Aorta (tissue), 5 donors: ENCODE measurements at regions of chr18 and their contacts with region 1.

Region 1: GRCh38 chr18:21004726-21005125 is 106.9 kb downstream of the ROCK1 start:
- DNase-seq: no peak
- ATAC-seq: peak; percentile 93
- H3K4me3 ChIP-seq: peak overlapping the region in 1 of 2 donors; percentile 26
- H3K27ac ChIP-seq: peak overlapping the region in 1 of 2 donors; percentile 28
- H3K4me1 ChIP-seq: peaks cover 0 to 3% of the 10 kb centered on the region in 2 donors
- H3K27me3 ChIP-seq: no peaks in the 10 kb centered on the region

Region 2: DNA sequence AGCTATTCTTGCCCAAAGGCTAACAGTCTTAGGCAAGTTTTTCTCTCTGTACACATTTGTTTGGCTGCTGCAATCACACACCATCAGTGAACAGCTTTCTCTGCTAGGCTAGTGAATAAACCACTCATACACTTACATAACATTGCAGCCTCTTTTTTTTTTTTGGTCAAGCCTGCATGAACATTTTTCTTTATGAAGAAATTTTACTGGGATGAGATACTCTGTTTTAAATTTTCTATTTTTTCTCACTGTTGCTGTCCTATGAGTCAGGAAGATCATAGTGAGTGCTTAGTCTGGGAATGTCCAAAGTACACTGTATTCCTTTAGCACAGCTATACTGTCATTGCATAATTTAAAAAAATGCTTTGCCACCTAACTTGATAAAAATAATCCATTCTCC is 48.4 kb after region 1 on chr18:
- intact Hi-C with region 1: loop called in 1 of 2 experiments (anchors 5 kb)
- DNase-seq: no peak
- ATAC-seq: peak; percentile 80
- H3K4me3 ChIP-seq: no peak overlapping the region
- H3K27ac ChIP-seq: peak overlapping the region in 1 of 2 donors; percentile 10
- H3K4me1 ChIP-seq: peaks cover 7 to 15% of the 10 kb centered on the region in 2 donors
- H3K27me3 ChIP-seq: no peaks in the 10 kb centered on the region

Region 3: GRCh38 chr18:21557607-21558253 is 553.0 kb after region 1 on chr18:
- intact Hi-C with region 1: no loop called
- DNase-seq: no peak
- ATAC-seq: no peak
- H3K4me3 ChIP-seq: no peak overlapping the region
- H3K27ac ChIP-seq: no peak overlapping the region
- H3K4me1 ChIP-seq: no peaks in the 10 kb centered on the region
- H3K27me3 ChIP-seq: no peaks in the 10 kb centered on the region